Panc1 (cell line): ENCODE measurements at regions of chr14 and their contacts with region 1.

Region 1: GRCh38 chr14:69505338-69506240 is 21.1 kb downstream of the PLEKHD1 start:
- DNase-seq: no peak
- ATAC-seq: no peak
- H3K4me3 ChIP-seq: no peak overlapping the region
- H3K27ac ChIP-seq: no peak overlapping the region
- H3K4me1 ChIP-seq: no peaks in the 10 kb centered on the region
- H3K27me3 ChIP-seq: no peaks in the 10 kb centered on the region
- CTCF ChIP-seq: no peak

Region 2: DNA sequence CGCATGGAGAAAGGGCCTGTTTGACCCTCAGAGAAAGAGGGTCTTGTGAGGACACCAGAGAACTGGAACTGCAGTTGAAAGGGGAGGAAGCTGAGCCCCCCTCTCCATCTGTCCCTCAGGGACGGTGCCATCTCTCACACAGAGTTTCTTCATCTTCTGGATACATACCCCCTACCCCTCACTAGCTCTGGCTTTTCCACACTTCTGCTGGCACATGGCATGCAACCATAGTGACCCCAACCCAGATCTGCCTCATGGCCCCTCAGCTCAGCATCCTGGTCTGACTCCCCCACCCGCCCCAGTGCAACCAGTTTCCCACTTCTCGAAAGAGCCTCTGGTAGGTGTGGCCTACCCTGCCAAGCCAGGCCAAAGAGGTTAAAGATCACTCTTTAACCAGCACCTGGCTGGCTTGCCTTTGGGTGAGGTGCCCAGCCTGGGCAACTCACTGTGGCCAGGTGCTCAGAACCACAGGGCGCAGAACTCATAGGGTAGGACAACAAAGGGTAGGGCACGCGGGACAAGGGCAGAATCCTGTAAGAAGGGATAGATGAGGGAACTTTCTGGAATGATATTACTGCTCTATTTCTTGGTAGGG is 219.8 kb before region 1 on chr14:
- CTCF ChIA-PET with region 1: interaction called, 10 read pairs
- POLR2A ChIA-PET with region 1: no interaction called
- in situ Hi-C with region 1: no loop called
- intact Hi-C with region 1: no loop called
- DNase-seq: no peak
- ATAC-seq: no peak
- H3K4me3 ChIP-seq: no peak overlapping the region
- H3K27ac ChIP-seq: no peak overlapping the region
- H3K4me1 ChIP-seq: no peaks in the 10 kb centered on the region
- H3K27me3 ChIP-seq: no peaks in the 10 kb centered on the region
- CTCF ChIP-seq: no peak

Region 3: GRCh38 chr14:69532566-69533340 is 27.2 kb after region 1 on chr14:
- CTCF ChIA-PET with region 1: no interaction called
- POLR2A ChIA-PET with region 1: no interaction called
- in situ Hi-C with region 1: no loop called
- intact Hi-C with region 1: no loop called
- DNase-seq: no peak
- ATAC-seq: no peak
- H3K4me3 ChIP-seq: no peak overlapping the region
- H3K27ac ChIP-seq: no peak overlapping the region
- H3K4me1 ChIP-seq: no peaks in the 10 kb centered on the region
- H3K27me3 ChIP-seq: no peaks in the 10 kb centered on the region
- CTCF ChIP-seq: no peak

Region 4: GRCh38 chr14:69547701-69548348 is 42.2 kb after region 1 on chr14:
- CTCF ChIA-PET with region 1: no interaction called
- POLR2A ChIA-PET with region 1: no interaction called
- in situ Hi-C with region 1: no loop called
- intact Hi-C with region 1: no loop called
- DNase-seq: no peak
- ATAC-seq: peak; percentile 66
- H3K4me3 ChIP-seq: no peak overlapping the region
- H3K27ac ChIP-seq: no peak overlapping the region
- H3K4me1 ChIP-seq: no peaks in the 10 kb centered on the region
- H3K27me3 ChIP-seq: no peaks in the 10 kb centered on the region; the same call in 1 of the 2 replicates
- CTCF ChIP-seq: peak; percentile 83